ENCODE measurements at regions of chr14 and their contacts with region 1.

Region 1: DNA sequence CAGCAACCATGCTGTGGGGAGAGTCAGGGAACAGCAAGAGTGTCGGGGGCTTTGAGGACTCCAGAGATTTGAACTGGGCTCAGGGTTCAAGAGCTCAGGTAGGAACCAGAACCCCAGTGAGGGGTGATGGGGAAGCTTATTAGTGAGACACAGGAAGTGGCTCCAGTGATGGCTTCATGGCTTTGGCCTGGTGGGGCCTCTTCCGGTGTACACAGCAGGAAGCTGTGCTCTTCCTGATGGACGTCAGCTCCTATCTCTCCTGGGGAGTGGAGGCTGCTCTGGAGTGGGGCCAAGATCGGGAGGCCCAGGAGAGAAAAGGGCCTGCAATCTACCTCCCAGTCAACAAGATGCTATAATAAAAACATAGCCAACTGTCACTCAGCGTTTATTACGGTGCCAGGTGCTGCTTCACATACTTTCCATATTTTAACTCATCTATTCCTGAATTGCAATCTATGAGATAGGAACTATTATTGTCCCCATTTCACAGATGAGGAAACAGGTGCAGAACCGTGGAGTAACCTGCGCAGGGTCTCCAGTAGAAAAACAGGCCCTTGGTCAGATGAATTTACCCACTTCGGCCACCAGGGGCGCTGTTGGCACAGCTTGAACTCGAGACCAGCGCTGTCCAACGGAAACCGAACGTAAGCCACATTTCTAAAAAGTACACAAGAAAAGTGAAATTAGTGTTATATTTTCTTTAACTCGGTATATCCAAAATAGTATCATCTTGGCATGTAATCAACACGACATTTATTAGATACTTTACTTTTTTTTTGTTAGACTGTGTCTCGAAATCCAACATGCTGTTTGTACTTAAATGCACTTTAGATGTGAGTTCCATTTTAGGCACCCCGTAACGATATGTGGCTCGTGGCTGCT is 63.6 kb upstream of the DLK1 start:
- DNase-seq: peak; percentile 72 to 88 (median 83)
- H3K4me3 ChIP-seq: no peak overlapping the region
- H3K27ac ChIP-seq: peak overlapping the region in 1 of 2 donors; percentile 83
- H3K4me1 ChIP-seq: peaks cover 14% of the 10 kb centered on the region
- H3K27me3 ChIP-seq: no peaks in the 10 kb centered on the region
- CTCF ChIP-seq: peak; percentile 92 to 93 (median 92)
- EP300 ChIP-seq: no peak
- POLR2A ChIP-seq: no peak

Region 2: GRCh38 chr14:100709289-100710284 is 46.5 kb after region 1 on chr14:
- intact Hi-C with region 1: loop called in 2 of 4 experiments (anchors 5 to 10 kb)
- DNase-seq: peak; percentile 64 to 82 (median 74)
- H3K4me3 ChIP-seq: no peak overlapping the region
- H3K27ac ChIP-seq: peak overlapping the region; percentile 91 to 98
- H3K4me1 ChIP-seq: peaks cover 23% of the 10 kb centered on the region
- H3K27me3 ChIP-seq: no peaks in the 10 kb centered on the region
- CTCF ChIP-seq: peak in 2 of 3 donors; percentile 29 to 84
- EP300 ChIP-seq: no peak
- POLR2A ChIP-seq: peak; percentile 18

Region 3: DNA sequence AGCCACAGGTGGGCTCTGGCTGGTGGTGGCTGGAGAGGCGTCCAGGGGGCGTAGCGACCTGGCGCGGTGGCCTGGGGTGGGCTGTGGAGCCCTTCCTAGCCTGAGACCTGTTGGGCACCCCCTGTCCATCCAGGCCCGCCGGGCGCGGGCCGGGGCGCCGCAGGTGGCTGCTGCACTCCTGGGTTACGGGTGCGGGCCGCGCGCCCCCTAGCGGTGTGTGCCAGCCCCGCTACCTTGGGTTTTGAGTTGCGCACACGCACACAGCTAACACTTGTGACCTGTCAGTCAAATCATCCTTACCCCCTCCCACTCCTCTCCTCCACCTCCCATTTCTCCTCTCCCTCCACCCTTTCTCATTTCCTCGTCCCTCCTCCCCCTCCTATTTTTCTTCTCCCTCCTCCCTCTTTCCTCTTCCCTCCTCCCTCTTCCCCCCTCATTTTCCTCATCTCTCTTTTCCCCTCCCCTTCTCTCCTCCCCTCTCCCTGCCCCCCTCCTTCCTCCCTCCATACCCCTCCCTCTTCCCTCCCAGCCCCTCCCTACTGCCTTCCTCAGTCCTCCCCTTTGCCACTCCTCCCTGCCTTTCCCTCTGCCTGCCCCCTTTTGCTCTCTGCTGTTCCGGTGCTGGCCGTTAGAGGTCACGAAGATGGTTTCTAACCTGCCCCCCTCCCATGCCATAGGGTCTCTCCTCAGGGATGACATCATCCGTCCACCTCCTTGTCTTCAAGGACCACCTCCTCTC is 165.1 kb after region 1 on chr14:
- intact Hi-C with region 1: loop called in 3 of 4 experiments (anchors 5 to 10 kb)
- DNase-seq: peak; percentile 48 to 80 (median 59)
- H3K4me3 ChIP-seq: peak overlapping the region; percentile 49
- H3K27ac ChIP-seq: peak overlapping the region in 1 of 2 donors; percentile 72
- H3K4me1 ChIP-seq: peaks cover 2% of the 10 kb centered on the region
- H3K27me3 ChIP-seq: no peaks in the 10 kb centered on the region
- CTCF ChIP-seq: peak; percentile 20 to 63 (median 50)
- EP300 ChIP-seq: no peak
- POLR2A ChIP-seq: no peak

Region 4: GRCh38 chr14:100900837-100901390 is 237.8 kb after region 1 on chr14:
- intact Hi-C with region 1: loop called in 2 of 4 experiments (anchors 5 kb)
- DNase-seq: peak in 3 of 5 donors; percentile 52 to 74 (median 53)
- H3K4me3 ChIP-seq: no peak overlapping the region
- H3K27ac ChIP-seq: no peak overlapping the region
- H3K4me1 ChIP-seq: peaks cover 4% of the 10 kb centered on the region
- H3K27me3 ChIP-seq: no peaks in the 10 kb centered on the region
- CTCF ChIP-seq: peak in 1 of 3 donors; percentile 28
- EP300 ChIP-seq: no peak
- POLR2A ChIP-seq: no peak

Region 5: GRCh38 chr14:101359221-101360053 is 696.3 kb after region 1 on chr14:
- intact Hi-C with region 1: loop called in 1 of 4 experiments (anchors 10 kb)
- DNase-seq: peak; percentile 66 to 77 (median 71)
- H3K4me3 ChIP-seq: no peak overlapping the region
- H3K27ac ChIP-seq: peak overlapping the region; percentile 9 to 94
- H3K4me1 ChIP-seq: peaks cover 48% of the 10 kb centered on the region
- H3K27me3 ChIP-seq: no peaks in the 10 kb centered on the region
- CTCF ChIP-seq: no peak
- EP300 ChIP-seq: no peak
- POLR2A ChIP-seq: no peak

Region 6: DNA sequence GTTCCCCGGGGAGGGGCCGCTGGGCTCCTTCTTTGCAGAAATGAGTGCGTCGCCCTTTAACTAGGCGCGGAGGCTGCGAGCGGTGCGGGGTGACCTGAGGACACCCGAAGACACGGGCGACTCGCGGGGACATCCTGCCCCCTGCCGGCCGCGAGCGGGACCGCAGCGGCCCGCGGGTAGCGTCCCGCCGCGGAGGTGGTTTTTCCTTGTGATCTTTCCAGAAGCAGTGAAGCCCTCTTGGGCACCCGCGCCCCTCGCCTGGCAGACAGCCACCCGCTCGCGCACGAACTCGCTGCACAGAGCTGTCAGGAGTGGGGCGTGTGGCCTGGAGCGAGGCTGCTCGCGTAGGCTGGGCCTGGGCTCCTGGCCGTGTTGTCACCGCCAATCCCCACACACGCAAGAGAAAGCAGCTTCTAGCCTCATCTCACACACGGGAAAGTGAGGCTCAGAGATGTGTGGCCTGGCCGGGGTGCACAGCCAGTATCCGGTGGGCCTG is 965.4 kb after region 1 on chr14:
- intact Hi-C with region 1: loop called in 2 of 4 experiments (anchors 5 kb)
- DNase-seq: peak; percentile 73 to 90 (median 81)
- H3K4me3 ChIP-seq: no peak overlapping the region
- H3K27ac ChIP-seq: peak overlapping the region in 1 of 2 donors; percentile 33
- H3K4me1 ChIP-seq: peaks cover 2% of the 10 kb centered on the region
- H3K27me3 ChIP-seq: no peaks in the 10 kb centered on the region
- CTCF ChIP-seq: peak; percentile 97 to 99 (median 97)
- EP300 ChIP-seq: no peak
- POLR2A ChIP-seq: peak; percentile 12